Heart right ventricle (tissue), 16 donors: ENCODE measurements at regions of chr14 and their contacts with region 1.

Region 1: DNA sequence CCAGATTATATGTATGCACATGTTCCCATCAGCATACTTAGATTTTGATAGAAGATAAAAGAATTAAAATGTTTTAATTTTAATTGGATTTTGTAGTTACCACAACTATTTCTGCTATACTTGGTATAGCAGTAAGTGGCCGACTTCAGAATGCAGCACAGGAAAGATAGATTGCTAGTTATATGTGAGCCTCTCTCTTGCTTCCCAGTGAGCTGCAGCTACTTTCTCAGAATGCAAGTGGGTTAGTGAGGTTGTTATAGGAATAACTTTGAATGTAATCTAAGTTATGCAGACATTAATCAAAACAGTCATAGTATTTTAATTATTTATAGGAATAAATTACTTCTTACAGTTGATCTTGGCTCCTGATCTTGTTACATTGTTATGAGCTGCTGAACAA is 240.6 kb downstream of the RAD51B start:
- DNase-seq: no peak
- ATAC-seq: no peak
- H3K4me3 ChIP-seq: no peak overlapping the region
- H3K27ac ChIP-seq: no peak overlapping the region
- H3K4me1 ChIP-seq: peaks cover 0 to 11% (median 0%) of the 10 kb centered on the region in 9 donors
- H3K27me3 ChIP-seq: no peaks in the 10 kb centered on the region
- CTCF ChIP-seq: no peak

Region 2: GRCh38 chr14:67971627-67972553 is 88.3 kb before region 1 on chr14:
- intact Hi-C with region 1: loop called in 1 of 10 experiments (anchors 10 kb)
- DNase-seq: no peak
- ATAC-seq: no peak
- H3K4me3 ChIP-seq: no peak overlapping the region
- H3K27ac ChIP-seq: no peak overlapping the region
- H3K4me1 ChIP-seq: peaks cover 0 to 1% (median 0%) of the 10 kb centered on the region in 9 donors
- H3K27me3 ChIP-seq: no peaks in the 10 kb centered on the region
- CTCF ChIP-seq: no peak

Region 3: GRCh38 chr14:68011406-68012028 is 48.7 kb before region 1 on chr14:
- intact Hi-C with region 1: no loop called
- DNase-seq: no peak
- ATAC-seq: peak in 5 of 8 donors; percentile 26 to 55 (median 42)
- H3K4me3 ChIP-seq: no peak overlapping the region
- H3K27ac ChIP-seq: peak overlapping the region in 5 of 10 donors; percentile 16 to 46 (median 27)
- H3K4me1 ChIP-seq: peaks cover 0 to 22% (median 0%) of the 10 kb centered on the region in 9 donors
- H3K27me3 ChIP-seq: no peaks in the 10 kb centered on the region
- CTCF ChIP-seq: no peak

Region 4: DNA sequence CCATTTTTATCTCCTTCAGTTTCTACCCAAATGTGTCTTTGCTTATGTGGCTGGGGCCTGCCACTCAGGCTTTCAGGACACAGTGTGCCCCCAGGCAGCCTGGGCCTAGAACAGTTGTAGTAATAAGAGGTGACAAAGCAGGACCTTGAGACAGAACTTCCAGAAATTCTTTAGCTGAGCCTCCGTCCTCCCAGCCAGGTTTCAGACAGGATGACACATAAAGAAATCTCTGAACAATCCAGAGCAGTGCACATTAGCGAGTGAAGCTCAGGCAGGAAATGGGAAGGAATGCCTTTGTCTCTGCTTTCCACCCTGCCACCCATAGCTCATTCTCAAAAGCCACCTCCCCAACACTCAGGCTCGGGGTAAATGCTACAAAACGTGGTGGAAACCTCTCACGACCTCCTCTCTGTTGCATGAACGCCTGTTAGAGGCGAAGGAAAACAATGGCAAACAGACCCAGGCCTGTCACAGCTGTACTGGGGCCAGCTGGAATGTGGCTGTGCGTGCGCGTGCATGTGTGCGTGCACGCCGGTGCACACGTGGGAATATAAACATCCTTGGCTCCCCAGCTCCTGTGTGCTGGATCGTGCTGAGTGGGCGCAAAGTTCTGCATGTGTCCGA is 445.9 kb after region 1 on chr14:
- intact Hi-C with region 1: no loop called
- DNase-seq: peak in 1 of 2 donors; percentile 38
- ATAC-seq: peak in 5 of 8 donors; percentile 13 to 50 (median 35)
- H3K4me3 ChIP-seq: no peak overlapping the region
- H3K27ac ChIP-seq: peak overlapping the region in 9 of 10 donors; percentile 23 to 65 (median 38)
- H3K4me1 ChIP-seq: peaks cover 12 to 50% (median 37%) of the 10 kb centered on the region in 9 donors
- H3K27me3 ChIP-seq: no peaks in the 10 kb centered on the region
- CTCF ChIP-seq: no peak